ENCODE measurements at regions of chr17 and their contacts with region 1.

Region 1: GRCh38 chr17:12830777-12831247 is 41.5 kb downstream of the ARHGAP44 start:
- DNase-seq: no peak
- H3K27ac ChIP-seq: no peak overlapping the region
- CTCF ChIP-seq: no peak

Region 2: GRCh38 chr17:12680407-12680897 is 150.4 kb before region 1 on chr17:
- CTCF ChIA-PET with region 1: no interaction called
- POLR2A ChIA-PET with region 1: no interaction called
- DNase-seq: no peak
- H3K27ac ChIP-seq: no peak overlapping the region
- CTCF ChIP-seq: no peak

Region 3: GRCh38 chr17:12883472-12883871 is 52.7 kb after region 1 on chr17:
- CTCF ChIA-PET with region 1: no interaction called
- POLR2A ChIA-PET with region 1: interaction called, 13 read pairs
- DNase-seq: no peak
- H3K27ac ChIP-seq: no peak overlapping the region
- CTCF ChIP-seq: no peak